B cell (primary cell): ENCODE measurements at regions of chr7 and their contacts with region 1.

Region 1: DNA sequence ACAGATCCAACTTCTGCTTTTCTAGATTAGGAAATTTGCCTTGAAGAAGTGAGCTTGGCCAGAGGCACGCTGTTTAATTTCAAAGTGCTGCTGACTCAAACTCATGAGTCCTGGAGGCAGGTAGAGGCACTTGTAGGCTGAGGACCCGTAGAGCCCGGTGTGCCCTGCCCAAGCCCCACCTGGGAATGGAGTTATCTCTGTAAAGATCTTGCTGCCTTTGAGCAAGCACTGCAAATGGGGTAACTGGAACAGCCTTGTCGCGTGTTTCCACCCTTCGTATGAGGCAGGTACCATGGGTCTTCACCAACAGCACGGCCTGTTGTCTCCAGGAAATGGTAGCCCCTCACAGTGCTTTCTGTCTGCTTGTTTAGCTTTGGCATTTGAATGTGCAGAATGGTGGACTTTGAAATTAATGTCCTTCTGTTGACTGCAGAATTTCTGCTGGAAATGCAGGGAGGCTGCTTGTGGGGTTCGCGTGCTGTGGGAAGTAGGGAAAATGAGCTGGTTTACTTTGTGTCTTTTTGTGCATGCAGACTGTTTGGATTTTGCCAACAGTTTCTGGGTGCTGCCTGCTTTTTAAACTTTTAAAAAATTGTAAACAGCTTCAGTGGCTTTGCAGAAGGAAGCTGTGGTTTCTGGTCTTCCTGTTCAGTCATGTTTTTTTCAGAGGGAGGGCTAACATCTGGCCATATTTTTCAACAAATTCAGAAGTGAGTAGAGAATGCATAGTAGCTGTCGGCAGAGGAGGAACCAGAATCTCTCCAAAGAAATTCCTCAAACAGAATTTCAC is 27.2 kb downstream of the CCM2 start:
- DNase-seq: peak; percentile 77
- ATAC-seq: peak; percentile 73
- H3K4me3 ChIP-seq: peak overlapping the region; percentile 77 to 99 (median 83)
- H3K4me3 Mint-ChIP-seq: peak overlapping the region; percentile 85
- H3K27ac ChIP-seq: peak overlapping the region; percentile 76 to 83
- H3K27ac Mint-ChIP-seq: peak overlapping the region; percentile 79
- H3K4me1 ChIP-seq: peaks cover 39 to 56% of the 10 kb centered on the region in 2 donors
- H3K4me1 Mint-ChIP-seq: peaks cover 57% of the 10 kb centered on the region
- H3K27me3 ChIP-seq: no peaks in the 10 kb centered on the region
- H3K27me3 Mint-ChIP-seq: no peaks in the 10 kb centered on the region
- CTCF ChIP-seq: no peak

Region 2: DNA sequence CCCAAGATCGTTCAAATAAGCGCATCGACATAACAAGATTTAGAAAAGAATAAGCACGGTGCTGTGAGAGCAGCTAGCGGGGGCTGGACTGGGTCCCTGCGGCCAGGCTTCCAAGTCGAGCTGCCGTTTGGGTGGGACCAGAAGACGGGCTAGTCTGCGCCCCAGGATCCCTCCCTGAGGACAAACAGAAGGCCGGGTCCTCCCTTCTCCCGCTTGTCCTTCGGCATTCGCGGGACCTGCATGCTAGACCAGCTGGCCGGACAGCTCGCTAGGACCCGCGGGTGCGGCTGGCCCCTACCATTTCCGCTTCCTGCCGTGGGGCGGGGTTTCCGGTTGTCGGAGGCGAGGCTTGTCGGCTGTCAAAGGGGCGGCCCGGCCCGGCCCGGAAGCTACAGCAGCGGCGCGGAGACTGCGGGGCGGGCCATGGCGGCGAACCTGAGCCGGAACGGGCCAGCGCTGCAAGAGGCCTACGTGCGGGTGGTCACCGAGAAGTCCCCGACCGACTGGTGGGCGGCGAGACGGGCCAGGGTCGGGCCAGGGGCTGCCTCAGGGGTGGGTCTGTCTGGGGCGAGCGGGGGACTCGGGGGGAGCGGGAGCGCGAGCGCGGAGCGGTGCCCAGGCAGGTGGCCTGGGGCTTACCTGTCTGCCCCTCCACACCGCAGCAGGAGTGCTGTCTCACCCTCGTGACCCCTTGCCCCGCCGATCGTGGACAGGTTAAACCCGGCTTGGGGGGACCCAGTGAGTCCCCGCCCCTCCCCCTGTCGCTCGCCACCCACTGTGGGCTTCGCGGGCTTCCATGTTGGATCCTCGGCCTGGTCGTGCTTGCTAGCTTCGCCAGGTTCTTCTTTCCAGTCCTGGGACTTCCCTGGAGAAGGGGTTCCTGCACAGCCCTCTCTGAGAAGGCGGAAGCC is 982.6 kb before region 1 on chr7 and contains the start of gene DBNL:
- CTCF ChIA-PET with region 1: no interaction called
- POLR2A ChIA-PET with region 1: no interaction called
- intact Hi-C with region 1: loop called (anchors 10 kb)
- DNase-seq: peak; percentile 89
- ATAC-seq: peak; percentile 42
- H3K4me3 ChIP-seq: peak within 1 kb of the TSS; percentile 86 to 96 (median 91)
- H3K4me3 Mint-ChIP-seq: peak within 1 kb of the TSS; percentile 98
- H3K27ac ChIP-seq: peak within 1 kb of the TSS; percentile 83 to 96
- H3K27ac Mint-ChIP-seq: peak within 1 kb of the TSS; percentile 99
- H3K4me1 ChIP-seq: peaks cover 51 to 60% of the 10 kb centered on the region in 2 donors
- H3K4me1 Mint-ChIP-seq: peaks cover 58% of the 10 kb centered on the region
- H3K27me3 ChIP-seq: no peaks in the 10 kb centered on the region
- H3K27me3 Mint-ChIP-seq: no peaks in the 10 kb centered on the region
- CTCF ChIP-seq: no peak
- total RNA-seq, gene DBNL: 311 and 335 TPM in 2 replicates

Region 3: DNA sequence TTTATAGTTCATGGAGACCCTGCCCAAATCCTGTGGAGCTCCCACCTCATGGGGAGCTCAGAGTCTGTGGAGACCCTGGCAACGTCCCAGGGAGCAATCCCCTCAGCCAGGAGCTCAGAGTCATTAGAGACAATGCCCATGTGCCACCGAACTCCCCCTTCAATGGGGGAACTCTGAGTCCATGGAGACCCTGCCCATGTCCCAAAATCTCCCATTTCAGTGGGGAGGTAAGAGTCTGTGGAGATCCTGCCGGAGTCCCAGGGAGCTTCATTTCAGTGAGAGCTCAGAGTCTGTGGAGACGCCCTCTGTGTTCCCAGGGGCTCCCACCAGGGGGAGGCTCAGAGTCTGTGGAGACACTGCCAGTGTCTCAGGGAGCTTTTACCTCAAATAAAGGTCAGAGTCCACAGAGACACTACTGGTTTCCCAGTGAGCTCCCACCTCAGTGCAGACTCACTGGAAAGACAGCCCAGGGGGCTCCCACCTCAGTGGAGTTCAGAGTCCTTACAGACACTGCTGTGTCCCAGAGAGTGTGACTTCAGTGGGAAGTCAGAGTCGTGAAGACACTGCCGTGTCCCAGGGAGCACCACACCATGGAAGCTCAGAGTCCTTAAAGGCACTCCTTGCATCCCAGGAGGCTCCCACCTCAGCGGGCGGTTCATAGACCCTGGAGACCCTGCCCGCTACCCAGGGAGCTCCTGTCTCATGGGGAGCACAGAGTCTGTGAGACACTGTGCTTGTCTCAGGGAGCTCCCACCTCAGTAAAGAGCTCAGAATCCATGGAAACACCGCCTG is 53.4 kb before region 1 on chr7:
- CTCF ChIA-PET with region 1: interaction called, 20 read pairs
- POLR2A ChIA-PET with region 1: interaction called, 22 read pairs
- intact Hi-C with region 1: no loop called
- DNase-seq: no peak
- ATAC-seq: no peak
- H3K4me3 ChIP-seq: no peak overlapping the region
- H3K4me3 Mint-ChIP-seq: no peak overlapping the region
- H3K27ac ChIP-seq: no peak overlapping the region
- H3K27ac Mint-ChIP-seq: peak overlapping the region; percentile 15
- H3K4me1 ChIP-seq: peaks cover 14 to 41% of the 10 kb centered on the region in 2 donors
- H3K4me1 Mint-ChIP-seq: peaks cover 38% of the 10 kb centered on the region
- H3K27me3 ChIP-seq: no peaks in the 10 kb centered on the region
- H3K27me3 Mint-ChIP-seq: no peaks in the 10 kb centered on the region
- CTCF ChIP-seq: peak; percentile 41

Region 4: DNA sequence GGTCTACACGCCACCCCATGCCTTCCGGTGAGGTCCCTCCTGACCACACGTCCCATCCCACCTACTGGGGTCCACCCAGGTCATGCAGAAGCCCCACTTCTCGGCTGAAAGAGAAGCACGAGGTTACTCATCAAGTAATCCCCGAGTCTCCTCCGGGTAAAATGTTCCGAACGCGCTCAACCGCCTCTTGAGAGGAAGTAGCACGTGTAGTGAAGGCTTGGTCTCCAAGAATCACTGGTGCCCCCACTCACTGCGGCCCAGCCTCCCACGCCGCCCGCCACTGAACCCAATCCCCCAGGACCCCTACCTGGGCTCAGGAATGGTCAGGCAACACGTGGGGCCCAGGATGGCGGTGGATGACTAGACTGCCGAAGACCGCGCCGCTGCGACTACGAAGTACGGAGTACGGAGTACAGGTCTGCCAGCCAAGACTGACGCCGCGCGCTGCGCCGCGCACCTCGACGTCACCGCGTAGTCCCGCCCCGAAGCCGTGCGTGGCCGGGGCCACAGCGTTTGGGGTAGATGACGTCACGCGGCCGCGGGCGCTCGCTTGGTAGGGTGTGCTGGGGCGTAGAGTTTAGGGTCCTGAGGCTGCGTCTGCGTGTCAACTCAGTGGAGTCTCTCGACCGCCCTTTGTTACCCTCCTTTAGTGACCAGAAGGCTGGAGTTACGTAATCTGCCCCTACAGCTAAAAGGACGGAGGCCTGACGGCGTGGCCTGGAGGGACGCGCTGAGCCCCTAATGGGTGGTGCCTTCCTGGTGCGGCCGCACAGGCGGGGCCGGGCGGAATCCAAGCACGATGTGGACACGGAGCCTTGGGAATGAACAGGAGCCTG is 40.7 kb before region 1 on chr7:
- CTCF ChIA-PET with region 1: no interaction called
- POLR2A ChIA-PET with region 1: interaction called, 4 read pairs
- intact Hi-C with region 1: loop called (anchors 1 kb)
- DNase-seq: peak; percentile 98
- ATAC-seq: peak; percentile 94
- H3K4me3 ChIP-seq: peak overlapping the region; percentile 62 to 92 (median 73)
- H3K4me3 Mint-ChIP-seq: peak overlapping the region; percentile 98
- H3K27ac ChIP-seq: peak overlapping the region; percentile 97 to 98
- H3K27ac Mint-ChIP-seq: peak overlapping the region; percentile 98
- H3K4me1 ChIP-seq: peaks cover 29 to 39% of the 10 kb centered on the region in 2 donors
- H3K4me1 Mint-ChIP-seq: peaks cover 51% of the 10 kb centered on the region
- H3K27me3 ChIP-seq: no peaks in the 10 kb centered on the region
- H3K27me3 Mint-ChIP-seq: no peaks in the 10 kb centered on the region
- CTCF ChIP-seq: no peak

Region 5: DNA sequence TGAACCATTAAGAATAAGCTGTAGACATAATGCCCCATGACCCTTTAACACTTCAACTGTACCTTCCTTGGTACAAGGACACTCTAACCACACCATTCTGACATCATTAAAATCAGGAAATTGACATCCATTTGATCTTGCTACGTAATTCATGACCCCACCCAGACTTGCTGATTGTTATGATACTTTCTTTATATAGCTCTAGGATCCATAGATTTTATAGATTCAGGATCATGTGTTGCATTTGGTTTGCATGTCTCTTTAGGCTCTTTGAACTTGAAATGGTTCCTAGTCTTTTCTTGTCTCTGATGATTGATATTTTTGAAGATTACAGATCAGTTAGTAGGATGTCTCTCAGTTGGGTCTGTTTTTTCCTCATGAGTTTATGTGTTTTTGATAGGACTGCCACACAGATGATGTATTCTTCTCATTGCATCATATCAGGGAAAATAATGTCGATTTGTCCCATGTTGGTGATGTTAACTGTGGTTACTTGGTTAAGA is 13.7 kb before region 1 on chr7:
- CTCF ChIA-PET with region 1: interaction called, 6 read pairs
- POLR2A ChIA-PET with region 1: interaction called, 11 read pairs
- intact Hi-C with region 1: no loop called
- DNase-seq: no peak
- ATAC-seq: no peak
- H3K4me3 ChIP-seq: no peak overlapping the region
- H3K4me3 Mint-ChIP-seq: no peak overlapping the region
- H3K27ac ChIP-seq: peak overlapping the region in 1 of 2 donors; percentile 9
- H3K27ac Mint-ChIP-seq: no peak overlapping the region
- H3K4me1 ChIP-seq: no peaks in the 10 kb centered on the region
- H3K4me1 Mint-ChIP-seq: peaks cover 16% of the 10 kb centered on the region
- H3K27me3 ChIP-seq: no peaks in the 10 kb centered on the region
- H3K27me3 Mint-ChIP-seq: no peaks in the 10 kb centered on the region
- CTCF ChIP-seq: no peak

Region 6: GRCh38 chr7:45111298-45112223 is 84.4 kb after region 1 on chr7 and contains the start of gene TBRG4:
- CTCF ChIA-PET with region 1: interaction called, 3 read pairs
- POLR2A ChIA-PET with region 1: interaction called, 7 read pairs
- intact Hi-C with region 1: loop called (anchors 2 kb)
- DNase-seq: peak; percentile 96
- ATAC-seq: peak; percentile 94
- H3K4me3 ChIP-seq: peak within 1 kb of the TSS; percentile 67 to 93 (median 72)
- H3K4me3 Mint-ChIP-seq: peak within 1 kb of the TSS; percentile 91
- H3K27ac ChIP-seq: peak within 1 kb of the TSS; percentile 91 to 98
- H3K27ac Mint-ChIP-seq: peak within 1 kb of the TSS; percentile 95
- H3K4me1 ChIP-seq: peaks cover 22 to 38% of the 10 kb centered on the region in 2 donors
- H3K4me1 Mint-ChIP-seq: peaks cover 40% of the 10 kb centered on the region
- H3K27me3 ChIP-seq: no peaks in the 10 kb centered on the region
- H3K27me3 Mint-ChIP-seq: no peaks in the 10 kb centered on the region
- CTCF ChIP-seq: no peak
- total RNA-seq, gene TBRG4: 111 and 116 TPM in 2 replicates

Region 7: GRCh38 chr7:46126675-46127300 is 1099.6 kb after region 1 on chr7:
- CTCF ChIA-PET with region 1: no interaction called
- POLR2A ChIA-PET with region 1: no interaction called
- intact Hi-C with region 1: no loop called
- DNase-seq: no peak
- ATAC-seq: no peak
- H3K4me3 ChIP-seq: no peak overlapping the region
- H3K4me3 Mint-ChIP-seq: no peak overlapping the region
- H3K27ac ChIP-seq: no peak overlapping the region
- H3K27ac Mint-ChIP-seq: no peak overlapping the region
- H3K4me1 ChIP-seq: no peaks in the 10 kb centered on the region
- H3K4me1 Mint-ChIP-seq: no peaks in the 10 kb centered on the region
- H3K27me3 ChIP-seq: no peaks in the 10 kb centered on the region
- H3K27me3 Mint-ChIP-seq: no peaks in the 10 kb centered on the region
- CTCF ChIP-seq: no peak